B cell (primary cell): ENCODE measurements at regions of chr1 and their contacts with region 1.

Region 1: GRCh38 chr1:189970319-189971249 is 507.1 kb downstream of the BRINP3 start:
- DNase-seq: no peak
- ATAC-seq: no peak
- H3K4me3 ChIP-seq: no peak overlapping the region
- H3K4me3 Mint-ChIP-seq: no peak overlapping the region
- H3K27ac ChIP-seq: no peak overlapping the region
- H3K27ac Mint-ChIP-seq: no peak overlapping the region
- H3K4me1 ChIP-seq: no peaks in the 10 kb centered on the region
- H3K4me1 Mint-ChIP-seq: no peaks in the 10 kb centered on the region
- H3K27me3 ChIP-seq: no peaks in the 10 kb centered on the region
- H3K27me3 Mint-ChIP-seq: no peaks in the 10 kb centered on the region
- CTCF ChIP-seq: no peak

Region 2: GRCh38 chr1:189834813-189835212 is 135.8 kb before region 1 on chr1:
- CTCF ChIA-PET with region 1: no interaction called
- POLR2A ChIA-PET with region 1: no interaction called
- intact Hi-C with region 1: no loop called
- DNase-seq: no peak
- ATAC-seq: no peak
- H3K4me3 ChIP-seq: no peak overlapping the region
- H3K4me3 Mint-ChIP-seq: no peak overlapping the region
- H3K27ac ChIP-seq: no peak overlapping the region
- H3K27ac Mint-ChIP-seq: no peak overlapping the region
- H3K4me1 ChIP-seq: no peaks in the 10 kb centered on the region
- H3K4me1 Mint-ChIP-seq: no peaks in the 10 kb centered on the region
- H3K27me3 ChIP-seq: no peaks in the 10 kb centered on the region
- H3K27me3 Mint-ChIP-seq: no peaks in the 10 kb centered on the region
- CTCF ChIP-seq: no peak

Region 3: DNA sequence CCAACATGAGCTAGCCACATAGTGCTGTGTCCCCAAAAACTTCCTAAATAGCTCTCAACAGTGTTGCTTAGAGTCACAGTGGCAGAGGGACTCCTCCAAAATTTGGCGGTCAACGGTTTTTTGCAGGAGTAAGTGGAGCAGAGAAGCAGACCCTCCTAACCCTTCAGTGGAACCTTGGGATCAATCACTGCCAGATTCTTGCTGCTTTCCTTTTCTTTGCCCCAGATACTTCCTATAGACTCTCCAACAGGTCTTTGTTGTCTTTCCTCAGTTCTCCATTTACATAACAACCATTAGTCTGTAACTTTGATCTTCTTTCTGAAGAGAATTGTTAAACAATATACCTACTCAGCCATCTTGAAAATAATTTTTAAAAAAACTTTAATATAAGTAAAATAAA is 49.0 kb before region 1 on chr1:
- CTCF ChIA-PET with region 1: no interaction called
- POLR2A ChIA-PET with region 1: no interaction called
- intact Hi-C with region 1: loop called (anchors 2 kb)
- DNase-seq: no peak
- ATAC-seq: no peak
- H3K4me3 ChIP-seq: no peak overlapping the region
- H3K4me3 Mint-ChIP-seq: no peak overlapping the region
- H3K27ac ChIP-seq: no peak overlapping the region
- H3K27ac Mint-ChIP-seq: no peak overlapping the region
- H3K4me1 ChIP-seq: no peaks in the 10 kb centered on the region
- H3K4me1 Mint-ChIP-seq: no peaks in the 10 kb centered on the region
- H3K27me3 ChIP-seq: no peaks in the 10 kb centered on the region
- H3K27me3 Mint-ChIP-seq: no peaks in the 10 kb centered on the region
- CTCF ChIP-seq: no peak